Gastrocnemius medialis (tissue), 4 donors: ENCODE measurements at regions of chr18 and their contacts with region 1.

Region 1: DNA sequence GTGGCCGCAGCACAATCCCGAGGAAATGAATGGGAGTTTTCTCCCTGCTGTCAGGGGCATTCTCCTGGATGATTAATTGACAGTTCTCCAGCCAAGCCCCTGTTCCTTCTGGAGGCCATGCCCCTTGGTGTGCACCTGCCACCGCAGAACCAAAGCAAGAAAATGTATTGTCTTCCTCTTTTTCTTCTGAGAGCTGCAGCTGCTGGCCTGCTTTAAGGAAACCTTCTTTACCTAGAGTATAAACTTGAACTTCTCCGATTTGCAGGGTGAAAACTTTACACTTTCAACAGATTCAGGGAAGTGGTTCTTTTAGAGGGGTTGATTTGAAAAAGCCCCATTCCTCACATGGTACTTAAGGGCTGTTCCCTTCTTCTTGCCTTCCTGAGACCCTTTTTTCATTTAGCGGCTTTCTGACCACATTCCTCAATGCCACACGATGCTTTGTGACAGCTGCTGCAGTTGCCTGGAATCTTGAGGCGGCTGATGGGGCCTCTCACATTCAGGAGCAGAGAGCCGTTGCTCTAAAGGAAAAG is 402.8 kb downstream of the TXNL1 start:
- DNase-seq: no peak
- ATAC-seq: no peak
- H3K4me3 ChIP-seq: no peak overlapping the region
- H3K27ac ChIP-seq: no peak overlapping the region
- H3K4me1 ChIP-seq: no peaks in the 10 kb centered on the region
- H3K27me3 ChIP-seq: no peaks in the 10 kb centered on the region
- CTCF ChIP-seq: no peak
- POLR2A ChIP-seq: no peak

Region 2: GRCh38 chr18:56289381-56289780 is 53.8 kb after region 1 on chr18:
- in situ Hi-C with region 1: no loop called
- intact Hi-C with region 1: no loop called
- DNase-seq: no peak
- ATAC-seq: peak in 1 of 2 donors; percentile 30
- H3K4me3 ChIP-seq: no peak overlapping the region
- H3K27ac ChIP-seq: no peak overlapping the region
- H3K4me1 ChIP-seq: peaks cover 0 to 9% of the 10 kb centered on the region in 2 donors
- H3K27me3 ChIP-seq: no peaks in the 10 kb centered on the region
- CTCF ChIP-seq: no peak
- POLR2A ChIP-seq: no peak

Region 3: GRCh38 chr18:56307354-56308170 is 72.0 kb after region 1 on chr18:
- in situ Hi-C with region 1: no loop called
- intact Hi-C with region 1: no loop called
- DNase-seq: no peak
- ATAC-seq: no peak
- H3K4me3 ChIP-seq: no peak overlapping the region
- H3K27ac ChIP-seq: no peak overlapping the region
- H3K4me1 ChIP-seq: no peaks in the 10 kb centered on the region
- H3K27me3 ChIP-seq: no peaks in the 10 kb centered on the region
- CTCF ChIP-seq: no peak
- POLR2A ChIP-seq: no peak

Region 4: GRCh38 chr18:56382541-56382940 is 147.0 kb after region 1 on chr18:
- in situ Hi-C with region 1: no loop called
- intact Hi-C with region 1: loop called (anchors 10 kb)
- DNase-seq: no peak
- ATAC-seq: no peak
- H3K4me3 ChIP-seq: no peak overlapping the region
- H3K27ac ChIP-seq: no peak overlapping the region
- H3K4me1 ChIP-seq: no peaks in the 10 kb centered on the region
- H3K27me3 ChIP-seq: no peaks in the 10 kb centered on the region
- CTCF ChIP-seq: no peak
- POLR2A ChIP-seq: no peak